Cardiac septum (tissue), 1 donor: ENCODE measurements at regions of chr17 and their contacts with region 1.

Region 1: DNA sequence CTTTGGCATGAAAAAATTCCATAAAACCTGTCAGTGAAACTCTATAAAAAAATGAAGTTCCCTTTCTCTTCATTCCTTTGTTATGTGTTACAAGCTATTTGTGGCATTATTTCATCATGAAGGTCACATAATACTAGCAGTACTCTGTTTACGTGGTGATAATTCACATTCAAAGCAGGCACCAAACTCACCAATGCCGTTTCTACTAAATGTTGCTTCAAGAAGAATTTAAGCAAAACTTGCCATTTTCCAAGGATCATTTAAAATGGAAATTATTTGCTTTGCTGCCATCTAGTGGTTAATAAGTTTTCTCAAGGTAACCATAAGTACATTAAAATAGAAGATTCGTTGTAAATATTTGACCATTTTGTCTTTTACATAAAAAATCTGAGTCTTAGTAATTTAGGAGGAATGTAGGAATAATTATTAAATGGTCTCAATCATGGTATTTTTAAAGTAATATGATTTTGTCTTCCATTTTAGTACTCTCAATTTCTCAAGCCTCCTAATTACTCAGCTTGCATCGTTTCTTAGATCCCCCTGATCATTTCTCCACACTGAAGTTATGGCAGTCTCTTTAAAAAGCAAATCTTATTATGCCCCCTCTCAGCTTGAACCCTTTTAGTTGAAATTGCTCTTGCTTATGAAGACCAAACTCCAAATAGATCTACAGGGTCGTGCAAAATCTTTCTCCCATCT is 80.8 kb downstream of the OMG start:
- DNase-seq: no peak

Region 2: DNA sequence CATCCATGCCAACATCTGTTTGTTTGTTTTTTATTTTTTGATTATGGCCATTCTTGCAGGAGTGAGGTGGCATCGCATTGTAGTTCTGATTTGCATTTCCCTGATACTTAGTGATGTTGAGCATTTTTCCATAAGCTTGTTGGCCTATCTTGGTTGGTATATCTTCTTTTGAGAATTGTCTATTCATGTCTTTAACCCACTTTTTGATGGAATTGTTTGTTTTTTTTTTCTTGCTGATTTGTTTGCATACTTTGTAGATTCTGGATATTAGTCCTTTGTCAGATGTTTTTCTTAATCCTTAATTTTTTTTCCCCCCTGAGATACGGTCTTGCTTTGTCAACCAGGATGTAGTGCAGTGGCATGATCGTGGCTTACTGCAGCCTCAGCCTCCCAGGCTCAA is 202.4 kb before region 1 on chr17:
- intact Hi-C with region 1: loop called (anchors 1 kb)
- DNase-seq: no peak

Region 3: GRCh38 chr17:31494259-31495021 is 278.2 kb after region 1 on chr17:
- intact Hi-C with region 1: no loop called
- DNase-seq: no peak